AG04449 (cell line): ENCODE measurements at regions of chr2 and their contacts with region 1.

Region 1: GRCh38 chr2:128178650-128179460 is 87.9 kb downstream of the UGGT1 start:
- DNase-seq: no peak
- H3K4me3 ChIP-seq: no peak overlapping the region
- CTCF ChIP-seq: peak; percentile 81

Region 2: DNA sequence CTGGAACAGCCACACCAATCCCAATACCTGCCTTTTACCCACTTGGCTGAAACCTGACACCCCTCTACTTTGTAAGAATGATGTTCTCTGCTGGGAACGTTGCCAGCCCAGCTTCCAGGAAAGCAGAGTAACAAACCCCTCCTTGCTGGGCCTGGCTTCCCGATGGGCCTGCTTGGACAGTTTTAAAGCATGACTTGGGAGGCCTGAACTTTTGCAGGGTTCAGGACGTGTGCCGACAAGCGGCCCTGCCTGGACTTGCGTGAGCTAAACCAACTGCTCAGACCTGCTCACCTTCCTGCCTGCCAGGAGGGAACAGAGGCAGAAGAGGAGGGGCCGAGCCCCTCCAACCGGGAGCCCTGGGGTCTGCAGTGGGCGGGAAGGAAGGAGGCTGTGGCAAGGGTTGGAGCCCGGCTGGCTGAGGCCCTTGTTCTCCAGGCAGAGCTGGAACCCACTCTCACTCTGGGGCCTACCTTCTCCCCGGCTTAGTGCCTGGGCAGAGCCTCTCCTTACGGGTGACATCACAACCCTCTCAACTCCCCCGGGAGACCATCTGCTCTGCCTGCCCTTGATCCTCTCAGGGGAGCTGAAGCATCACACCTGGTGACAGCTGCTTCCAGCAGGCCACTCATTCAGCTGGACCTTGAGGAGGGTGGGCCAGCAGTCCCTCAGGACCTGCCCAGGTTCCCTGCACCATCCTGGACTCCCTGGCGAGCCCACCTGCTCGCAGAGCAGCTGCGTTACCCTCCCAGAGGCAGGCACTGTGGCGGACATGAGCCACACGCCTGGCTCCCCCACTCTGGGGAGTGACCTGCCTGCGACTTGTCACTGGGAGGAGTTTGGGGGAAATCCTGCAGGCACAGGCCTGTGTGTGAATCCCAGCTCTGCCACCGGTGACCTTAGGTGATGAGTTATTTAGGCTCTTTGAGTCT is 126.6 kb after region 1 on chr2:
- CTCF ChIA-PET with region 1: interaction called, 10 read pairs
- POLR2A ChIA-PET with region 1: no interaction called
- DNase-seq: peak; percentile 89
- H3K4me3 ChIP-seq: peak overlapping the region; percentile 9; the same call in 1 of the 2 replicates
- CTCF ChIP-seq: no peak